ENCODE measurements at regions of chr14 and their contacts with region 1.

Region 1: GRCh38 chr14:99683619-99684355 is at the start of gene CYP46A1:
- DNase-seq: peak; percentile 99 to 100 (median 100)
- ATAC-seq: peak; percentile 94
- H3K4me3 ChIP-seq: peak within 1 kb of the TSS; percentile 64
- H3K4me3 Mint-ChIP-seq: peak within 1 kb of the TSS; percentile 95
- H3K27ac ChIP-seq: peak within 1 kb of the TSS; percentile 46 to 50
- H3K27ac Mint-ChIP-seq: peak within 1 kb of the TSS; percentile 55
- H3K4me1 ChIP-seq: peaks cover 31% of the 10 kb centered on the region
- H3K4me1 Mint-ChIP-seq: peaks cover 12% of the 10 kb centered on the region
- H3K27me3 ChIP-seq: peaks cover 9 to 14% of the 10 kb centered on the region in 2 experiments
- H3K27me3 Mint-ChIP-seq: peaks cover 18% of the 10 kb centered on the region
- CTCF ChIP-seq: no peak
- total RNA-seq, gene CYP46A1: 0.11 to 0.22 TPM

Region 2: GRCh38 chr14:98725191-98725590 is 958.6 kb before region 1 on chr14:
- CTCF ChIA-PET with region 1: no interaction called
- POLR2A ChIA-PET with region 1: no interaction called
- intact Hi-C with region 1: no loop called
- DNase-seq: no peak
- ATAC-seq: no peak
- H3K4me3 ChIP-seq: no peak overlapping the region
- H3K4me3 Mint-ChIP-seq: no peak overlapping the region
- H3K27ac ChIP-seq: no peak overlapping the region
- H3K27ac Mint-ChIP-seq: no peak overlapping the region
- H3K4me1 ChIP-seq: no peaks in the 10 kb centered on the region
- H3K4me1 Mint-ChIP-seq: peaks cover 10% of the 10 kb centered on the region
- H3K27me3 ChIP-seq: no peaks in the 10 kb centered on the region
- H3K27me3 Mint-ChIP-seq: no peaks in the 10 kb centered on the region
- CTCF ChIP-seq: no peak

Region 3: DNA sequence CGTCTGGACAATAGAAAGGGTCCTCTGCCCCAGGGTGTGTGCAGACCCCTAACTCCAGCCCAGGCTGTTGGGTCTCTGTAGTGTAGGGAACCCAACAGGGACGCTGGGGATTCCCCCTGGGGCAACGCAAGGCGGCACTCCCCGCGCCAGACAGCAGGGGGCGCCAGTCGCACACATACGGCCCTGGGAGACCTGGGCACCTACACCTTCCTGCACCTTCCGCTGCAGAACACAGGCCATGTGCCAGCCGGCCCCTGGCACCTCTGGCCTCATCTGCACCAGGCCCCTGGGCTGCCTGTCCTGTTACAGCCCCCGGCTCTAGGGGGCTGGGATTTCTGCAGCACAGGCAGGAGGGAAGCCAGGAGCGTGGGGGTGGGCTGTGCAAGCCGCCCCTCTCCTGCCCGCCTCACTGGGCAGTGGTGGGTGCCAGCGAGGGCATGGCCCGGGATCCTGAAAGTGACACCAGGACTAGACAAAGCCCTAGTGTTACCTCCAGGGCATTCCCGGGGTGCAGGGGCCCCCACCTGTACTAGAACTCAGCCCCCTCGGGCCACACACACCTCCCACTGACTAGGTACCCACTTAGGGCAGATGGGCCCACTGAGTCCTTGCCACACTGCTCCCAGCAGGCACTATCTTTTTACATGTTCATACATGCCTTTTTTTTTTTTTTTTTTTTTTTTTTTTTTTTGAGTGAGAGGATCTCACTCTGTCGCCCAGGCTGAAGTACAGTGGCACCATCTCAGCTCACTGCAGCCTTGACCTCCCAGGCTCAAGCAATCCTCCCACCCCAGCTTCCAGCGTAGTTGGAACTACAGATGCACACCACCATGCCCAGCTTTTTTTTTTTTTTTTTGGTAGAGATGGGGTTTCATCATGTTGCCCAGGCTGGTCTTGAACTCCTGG is 165.1 kb before region 1 on chr14:
- CTCF ChIA-PET with region 1: no interaction called
- POLR2A ChIA-PET with region 1: no interaction called
- intact Hi-C with region 1: loop called (anchors 1 to 5 kb)
- DNase-seq: peak; percentile 72 to 90 (median 80)
- ATAC-seq: peak; percentile 92
- H3K4me3 ChIP-seq: no peak overlapping the region
- H3K4me3 Mint-ChIP-seq: no peak overlapping the region
- H3K27ac ChIP-seq: no peak overlapping the region
- H3K27ac Mint-ChIP-seq: no peak overlapping the region
- H3K4me1 ChIP-seq: peaks cover 8% of the 10 kb centered on the region
- H3K4me1 Mint-ChIP-seq: no peaks in the 10 kb centered on the region
- H3K27me3 ChIP-seq: no peaks in the 10 kb centered on the region
- H3K27me3 Mint-ChIP-seq: no peaks in the 10 kb centered on the region
- CTCF ChIP-seq: peak; percentile 97

Region 4: DNA sequence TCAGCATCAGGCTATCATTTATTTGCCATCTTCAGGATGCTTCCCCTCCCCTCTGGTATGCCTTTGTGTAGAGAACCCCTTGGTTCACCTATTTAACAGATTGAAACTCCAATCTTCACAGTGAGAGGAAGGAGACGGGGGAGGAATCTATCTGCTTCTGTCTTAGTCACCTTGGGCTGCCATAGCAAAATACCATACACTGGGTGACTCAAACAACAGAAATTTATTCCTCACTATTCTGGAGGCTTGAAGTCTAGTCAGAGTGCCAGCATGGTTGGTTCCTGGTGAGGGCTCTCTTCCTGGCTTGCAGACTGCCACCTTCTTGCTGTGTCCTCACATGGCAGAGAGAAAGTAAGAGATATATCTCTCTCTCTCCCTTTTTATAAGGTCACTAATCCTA is 96.0 kb after region 1 on chr14:
- CTCF ChIA-PET with region 1: no interaction called
- POLR2A ChIA-PET with region 1: no interaction called
- intact Hi-C with region 1: no loop called
- DNase-seq: no peak
- ATAC-seq: no peak
- H3K4me3 ChIP-seq: no peak overlapping the region
- H3K4me3 Mint-ChIP-seq: no peak overlapping the region
- H3K27ac ChIP-seq: no peak overlapping the region
- H3K27ac Mint-ChIP-seq: no peak overlapping the region
- H3K4me1 ChIP-seq: no peaks in the 10 kb centered on the region
- H3K4me1 Mint-ChIP-seq: no peaks in the 10 kb centered on the region
- H3K27me3 ChIP-seq: peaks cover 7% of the 10 kb centered on the region in 2 experiments
- H3K27me3 Mint-ChIP-seq: peaks cover 65% of the 10 kb centered on the region
- CTCF ChIP-seq: no peak

Region 5: DNA sequence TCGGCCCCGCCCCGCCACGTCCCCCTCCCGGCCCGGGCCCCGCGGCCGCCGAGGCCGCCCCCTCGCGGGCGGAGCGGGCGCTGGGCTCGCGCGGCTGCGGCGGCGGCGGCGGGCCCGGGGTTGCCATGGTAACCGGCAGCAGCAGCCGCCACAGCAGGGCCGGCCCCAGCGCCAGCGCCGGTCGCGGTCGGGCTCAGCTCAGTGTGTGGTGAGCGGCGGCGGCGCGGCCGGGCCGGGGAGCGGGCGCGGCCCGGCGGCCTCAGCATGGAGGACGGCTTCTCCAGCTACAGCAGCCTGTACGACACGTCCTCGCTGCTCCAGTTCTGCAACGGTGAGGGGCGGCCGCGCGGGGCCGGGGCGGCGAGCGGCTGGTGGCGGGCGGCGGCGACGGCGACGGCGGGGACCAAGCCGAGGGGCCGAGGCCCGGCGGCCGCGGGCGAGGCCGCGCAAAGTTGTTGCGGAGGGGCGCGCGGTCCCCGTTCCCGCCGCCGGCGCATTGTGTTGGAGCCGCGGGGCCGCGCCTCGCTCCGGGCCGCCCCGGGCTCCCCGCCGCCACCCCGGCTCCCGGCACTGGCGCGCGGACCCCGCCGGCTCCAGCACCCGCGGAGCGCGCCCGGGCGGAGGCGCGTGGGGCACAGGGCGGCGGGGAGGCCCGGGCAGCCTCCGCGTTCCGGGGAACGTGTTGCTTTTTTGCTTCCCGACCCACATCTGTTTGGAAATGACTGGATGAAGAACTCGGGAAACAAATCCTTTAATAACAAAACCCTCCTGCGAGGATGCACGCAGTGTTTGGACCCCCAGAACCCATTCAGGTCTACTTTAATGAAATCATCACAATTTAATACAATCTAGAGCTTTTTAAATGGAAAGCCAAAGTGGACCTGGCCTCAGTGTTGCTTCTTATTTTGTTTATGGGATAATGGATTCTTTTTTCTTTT is 109.7 kb after region 1 on chr14 and contains the start of gene EML1:
- CTCF ChIA-PET with region 1: no interaction called
- POLR2A ChIA-PET with region 1: interaction called, 3 read pairs
- intact Hi-C with region 1: loop called in 1 of 2 experiments (anchors 2 kb)
- DNase-seq: peak; percentile 56 to 91 (median 71)
- ATAC-seq: peak; percentile 81
- H3K4me3 ChIP-seq: peak within 1 kb of the TSS; percentile 29
- H3K4me3 Mint-ChIP-seq: peak within 1 kb of the TSS; percentile 83
- H3K27ac ChIP-seq: no peak within 1 kb of the TSS
- H3K27ac Mint-ChIP-seq: no peak within 1 kb of the TSS
- H3K4me1 ChIP-seq: peaks cover 8% of the 10 kb centered on the region
- H3K4me1 Mint-ChIP-seq: peaks cover 29% of the 10 kb centered on the region
- H3K27me3 ChIP-seq: peaks cover 12 to 19% of the 10 kb centered on the region in 2 experiments
- H3K27me3 Mint-ChIP-seq: peaks cover 38% of the 10 kb centered on the region
- CTCF ChIP-seq: no peak
- total RNA-seq, gene EML1: 0.59 TPM in 1 of 2 experiments, not detected in the other

Region 6: DNA sequence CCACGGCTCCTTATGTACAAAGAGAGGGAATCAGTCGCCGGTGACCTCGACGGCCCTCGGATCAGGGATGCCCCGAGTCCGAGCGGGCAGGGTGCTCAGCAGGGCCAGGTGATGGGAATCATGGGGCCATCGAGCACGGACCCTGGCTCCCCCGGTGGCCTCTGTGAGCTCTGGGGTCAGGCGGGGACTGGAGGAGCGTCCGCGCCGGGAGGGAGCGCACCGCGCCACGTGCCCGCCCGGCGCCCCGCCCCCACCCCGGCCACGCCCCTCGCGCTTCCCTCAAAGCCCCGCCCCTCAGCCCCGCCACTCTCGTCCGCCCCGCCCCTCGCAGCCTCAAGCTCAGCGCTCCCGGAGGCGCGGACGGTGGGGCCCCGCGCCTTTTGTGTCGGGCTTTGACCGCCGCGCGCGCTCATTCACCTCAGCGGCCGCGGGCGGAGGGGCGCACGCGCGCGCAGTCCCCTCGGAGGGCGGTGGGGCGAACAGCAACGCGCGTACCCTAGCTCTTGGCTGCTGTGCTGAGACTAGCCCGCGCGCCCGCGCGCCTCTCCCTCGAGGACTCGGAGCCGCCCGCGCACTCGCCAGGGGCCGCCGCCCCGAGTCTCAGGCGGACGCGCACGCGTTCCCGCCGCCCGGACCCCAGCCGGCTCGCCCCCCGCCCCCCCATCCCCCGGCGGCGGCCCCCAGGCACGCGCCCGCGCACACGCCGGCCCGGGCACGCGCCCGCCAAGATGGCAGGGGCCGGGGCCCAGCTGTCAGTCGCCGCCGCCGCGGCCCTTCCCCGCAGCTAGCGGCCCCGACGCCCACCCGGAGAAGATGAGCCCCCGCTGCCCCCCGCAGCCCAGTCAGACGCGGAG is 287.5 kb after region 1 on chr14:
- CTCF ChIA-PET with region 1: no interaction called
- POLR2A ChIA-PET with region 1: interaction called, 3 read pairs
- intact Hi-C with region 1: loop called in 1 of 2 experiments (anchors 5 kb)
- DNase-seq: peak; percentile 70 to 92 (median 76)
- ATAC-seq: peak; percentile 88
- H3K4me3 ChIP-seq: peak overlapping the region; percentile 24
- H3K4me3 Mint-ChIP-seq: peak overlapping the region; percentile 86
- H3K27ac ChIP-seq: no peak overlapping the region
- H3K27ac Mint-ChIP-seq: no peak overlapping the region
- H3K4me1 ChIP-seq: peaks cover 12% of the 10 kb centered on the region
- H3K4me1 Mint-ChIP-seq: peaks cover 26% of the 10 kb centered on the region
- H3K27me3 ChIP-seq: peaks cover 0 to 3% of the 10 kb centered on the region in 2 experiments
- H3K27me3 Mint-ChIP-seq: peaks cover 21% of the 10 kb centered on the region
- CTCF ChIP-seq: no peak